ENCODE measurements at regions of chr5 and their contacts with region 1.

Region 1: DNA sequence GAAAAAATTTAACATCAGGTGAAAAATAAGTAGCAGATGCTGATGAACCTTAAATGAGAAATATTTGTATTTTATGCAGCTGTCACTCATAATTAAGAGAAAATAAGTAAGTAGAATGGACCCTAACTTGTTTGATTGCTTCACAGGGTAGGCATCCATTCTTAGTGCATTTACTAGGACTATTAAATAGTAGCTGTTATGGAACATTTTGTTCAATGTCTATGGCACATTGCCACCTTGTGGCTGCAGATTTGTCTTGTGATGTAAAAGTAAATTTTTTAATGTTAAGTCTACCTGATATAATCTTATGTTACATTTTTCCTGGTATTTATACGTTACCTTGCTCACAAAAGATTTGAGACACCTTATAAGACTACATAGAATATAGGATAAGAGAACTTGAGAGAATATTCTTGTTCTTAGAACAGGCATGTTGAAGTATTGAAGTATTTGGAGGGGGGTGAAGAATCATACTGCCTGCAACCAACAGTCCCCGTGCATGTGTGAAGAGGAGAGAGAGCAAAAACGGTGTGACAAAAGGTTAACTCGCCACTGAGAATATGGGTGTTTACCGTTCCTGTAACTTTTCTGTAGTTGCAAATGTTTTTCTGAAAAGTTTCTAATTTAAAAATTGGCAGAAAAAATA is 161.1 kb downstream of the MAST4 start:
- DNase-seq: peak; percentile 63
- ATAC-seq: peak; percentile 51
- H3K4me3 ChIP-seq: no peak overlapping the region
- H3K4me3 Mint-ChIP-seq: no peak overlapping the region
- H3K27ac ChIP-seq: no peak overlapping the region
- H3K27ac Mint-ChIP-seq: no peak overlapping the region
- H3K4me1 ChIP-seq: peaks cover 0 to 5% of the 10 kb centered on the region in 2 donors
- H3K4me1 Mint-ChIP-seq: peaks cover 8% of the 10 kb centered on the region
- H3K27me3 ChIP-seq: no peaks in the 10 kb centered on the region
- H3K27me3 Mint-ChIP-seq: peaks cover 14% of the 10 kb centered on the region
- CTCF ChIP-seq: peak; percentile 77

Region 2: DNA sequence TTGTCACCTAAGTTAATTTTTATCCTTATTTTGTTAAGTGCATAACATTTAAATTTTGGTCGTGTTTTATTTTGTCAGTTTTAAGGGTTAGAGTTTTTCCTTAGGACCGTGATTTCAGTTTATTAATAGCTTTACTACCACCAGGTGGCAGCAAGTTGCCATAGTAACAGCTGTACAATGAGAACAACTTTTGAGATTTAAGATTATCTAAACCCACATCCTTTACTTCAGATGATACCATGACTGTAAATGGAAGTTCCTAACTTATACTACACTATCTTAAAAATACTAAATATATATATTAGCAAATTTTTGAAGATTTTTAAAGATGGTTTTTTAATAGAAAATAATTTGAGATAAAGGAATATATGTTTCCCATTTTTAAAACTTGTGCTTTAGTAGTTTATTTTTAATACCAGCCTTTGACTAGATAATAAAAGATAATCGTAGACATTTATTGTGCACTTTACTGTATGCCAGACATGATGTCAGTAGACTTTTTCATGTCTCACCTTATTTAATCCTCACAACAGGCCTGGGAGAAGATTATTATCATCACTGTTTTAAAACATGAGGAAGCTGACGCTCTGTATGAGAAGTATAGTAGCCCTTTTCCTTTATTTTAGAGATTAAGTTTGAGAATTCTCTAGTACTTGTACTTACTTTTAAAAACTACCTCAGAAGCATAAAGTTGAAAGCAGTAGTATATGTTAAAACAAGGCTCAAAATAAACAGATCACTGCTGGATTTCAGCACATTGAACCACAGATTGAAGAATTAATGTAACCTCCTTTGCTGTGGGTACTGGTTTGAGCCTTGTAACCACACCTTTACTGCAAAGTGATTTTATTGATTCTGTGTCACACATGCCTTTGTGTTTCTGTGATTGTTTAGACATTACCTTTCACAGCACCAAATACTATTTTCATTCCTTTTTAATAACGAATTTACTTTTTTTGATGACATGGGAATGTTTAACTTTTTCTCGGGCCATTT is 585.7 kb before region 1 on chr5:
- CTCF ChIA-PET with region 1: interaction called, 10 read pairs
- POLR2A ChIA-PET with region 1: no interaction called
- intact Hi-C with region 1: loop called (anchors 1 kb)
- DNase-seq: peak; percentile 71
- ATAC-seq: peak; percentile 64
- H3K4me3 ChIP-seq: no peak overlapping the region
- H3K4me3 Mint-ChIP-seq: no peak overlapping the region
- H3K27ac ChIP-seq: peak overlapping the region; percentile 18 to 60
- H3K27ac Mint-ChIP-seq: no peak overlapping the region
- H3K4me1 ChIP-seq: peaks cover 0 to 8% of the 10 kb centered on the region in 2 donors
- H3K4me1 Mint-ChIP-seq: peaks cover 20% of the 10 kb centered on the region
- H3K27me3 ChIP-seq: no peaks in the 10 kb centered on the region
- H3K27me3 Mint-ChIP-seq: no peaks in the 10 kb centered on the region
- CTCF ChIP-seq: peak; percentile 70

Region 3: DNA sequence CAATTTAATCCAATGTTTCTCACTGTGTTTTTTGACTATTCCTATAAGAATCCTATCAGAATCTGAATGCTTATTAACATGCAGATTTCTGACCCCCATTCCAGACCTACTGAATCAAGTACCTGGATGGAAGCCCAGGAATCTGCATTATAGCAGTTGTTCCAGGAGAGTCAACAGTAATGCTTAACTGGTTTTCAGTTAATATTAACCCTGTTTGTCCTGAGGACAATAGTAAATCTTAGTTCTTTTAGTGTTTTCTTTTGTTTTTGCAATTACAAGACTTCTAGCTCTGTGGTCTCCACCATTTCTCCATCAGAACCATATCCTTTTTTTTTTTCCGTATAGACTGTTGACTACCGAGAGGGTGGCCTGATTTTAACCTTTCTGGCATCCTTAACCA is 445.0 kb before region 1 on chr5:
- CTCF ChIA-PET with region 1: interaction called, 462 read pairs
- POLR2A ChIA-PET with region 1: interaction called, 6 read pairs
- intact Hi-C with region 1: loop called (anchors 1 kb)
- DNase-seq: no peak
- ATAC-seq: no peak
- H3K4me3 ChIP-seq: no peak overlapping the region
- H3K4me3 Mint-ChIP-seq: no peak overlapping the region
- H3K27ac ChIP-seq: no peak overlapping the region
- H3K27ac Mint-ChIP-seq: no peak overlapping the region
- H3K4me1 ChIP-seq: no peaks in the 10 kb centered on the region
- H3K4me1 Mint-ChIP-seq: no peaks in the 10 kb centered on the region
- H3K27me3 ChIP-seq: no peaks in the 10 kb centered on the region
- H3K27me3 Mint-ChIP-seq: peaks cover 6% of the 10 kb centered on the region
- CTCF ChIP-seq: no peak

Region 4: DNA sequence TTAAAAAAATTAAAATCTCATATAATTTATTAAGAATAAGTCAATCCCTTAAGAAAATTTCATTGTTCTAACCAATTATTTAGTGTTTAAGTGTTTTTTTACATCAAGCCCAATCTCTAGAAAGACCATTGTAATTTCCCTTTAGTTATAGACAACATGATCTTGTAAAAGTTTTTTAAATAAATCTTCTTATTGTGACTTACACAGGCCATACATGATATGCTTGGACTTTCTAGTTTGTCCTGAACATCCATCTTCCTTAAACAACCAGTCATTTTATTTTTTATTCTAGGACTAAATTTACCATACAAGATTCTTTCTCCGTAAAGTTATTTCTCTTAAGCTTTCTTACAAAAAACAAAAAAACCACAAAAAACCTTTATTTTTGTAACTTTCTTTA is 287.6 kb before region 1 on chr5:
- CTCF ChIA-PET with region 1: interaction called, 18 read pairs
- POLR2A ChIA-PET with region 1: no interaction called
- intact Hi-C with region 1: loop called (anchors 1 kb)
- DNase-seq: no peak
- ATAC-seq: no peak
- H3K4me3 ChIP-seq: no peak overlapping the region
- H3K4me3 Mint-ChIP-seq: no peak overlapping the region
- H3K27ac ChIP-seq: no peak overlapping the region
- H3K27ac Mint-ChIP-seq: no peak overlapping the region
- H3K4me1 ChIP-seq: peaks cover 4 to 8% of the 10 kb centered on the region in 2 donors
- H3K4me1 Mint-ChIP-seq: peaks cover 13% of the 10 kb centered on the region
- H3K27me3 ChIP-seq: no peaks in the 10 kb centered on the region
- H3K27me3 Mint-ChIP-seq: no peaks in the 10 kb centered on the region
- CTCF ChIP-seq: no peak

Region 5: DNA sequence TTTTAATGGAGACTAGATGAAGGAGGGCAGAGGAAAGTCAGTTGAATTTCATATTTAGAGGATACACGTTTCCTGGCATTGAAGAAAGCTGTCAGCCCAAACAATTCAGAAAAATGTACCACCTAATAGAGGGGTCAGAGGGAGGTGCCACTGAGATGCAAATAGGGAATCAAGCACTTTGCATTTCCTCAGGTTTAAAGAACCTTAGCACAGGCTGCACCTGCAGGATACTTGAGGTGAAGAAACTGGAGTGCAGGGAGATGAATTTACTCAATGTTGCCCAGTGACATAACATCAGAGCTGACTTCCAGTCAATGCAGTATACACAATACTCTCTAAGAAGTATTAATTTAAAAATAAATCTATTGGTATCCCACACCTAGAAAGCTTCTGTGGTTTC is 228.1 kb before region 1 on chr5:
- CTCF ChIA-PET with region 1: interaction called, 11 read pairs
- POLR2A ChIA-PET with region 1: no interaction called
- intact Hi-C with region 1: no loop called
- DNase-seq: no peak
- ATAC-seq: peak; percentile 36
- H3K4me3 ChIP-seq: no peak overlapping the region
- H3K4me3 Mint-ChIP-seq: no peak overlapping the region
- H3K27ac ChIP-seq: no peak overlapping the region
- H3K27ac Mint-ChIP-seq: no peak overlapping the region
- H3K4me1 ChIP-seq: no peaks in the 10 kb centered on the region
- H3K4me1 Mint-ChIP-seq: peaks cover 4% of the 10 kb centered on the region
- H3K27me3 ChIP-seq: no peaks in the 10 kb centered on the region
- H3K27me3 Mint-ChIP-seq: no peaks in the 10 kb centered on the region
- CTCF ChIP-seq: no peak

Region 6: DNA sequence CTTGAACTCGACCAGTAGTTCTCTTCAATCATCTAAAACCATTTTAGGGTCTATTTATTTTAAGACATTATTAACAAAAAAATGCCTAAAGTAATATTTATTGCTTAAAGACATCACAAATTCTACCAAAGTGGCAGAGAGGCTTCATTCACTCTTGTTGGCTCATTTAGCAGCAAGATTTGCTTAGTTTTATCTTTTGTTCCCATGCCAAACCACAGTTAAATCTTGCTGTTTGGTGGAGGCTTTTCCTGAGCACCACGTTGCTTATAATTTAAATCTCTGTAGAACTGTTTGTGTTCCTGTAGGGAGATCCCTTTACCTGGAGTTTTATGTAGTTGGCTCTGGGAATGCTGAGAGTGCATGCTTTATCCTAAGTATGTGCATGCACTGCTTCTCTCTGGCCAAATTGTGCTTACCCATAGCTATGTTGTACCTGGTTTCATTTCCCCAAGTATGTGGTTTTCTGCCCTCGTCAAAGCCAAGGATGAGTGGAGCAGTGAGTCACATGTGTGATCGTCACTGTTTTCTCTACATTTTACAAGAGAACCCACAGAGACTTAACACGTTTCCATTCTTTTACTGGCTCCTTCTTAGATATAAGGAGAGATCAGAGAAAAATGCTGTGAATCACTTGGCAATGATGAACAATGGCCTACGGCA is 203.3 kb before region 1 on chr5:
- CTCF ChIA-PET with region 1: interaction called, 3 read pairs
- POLR2A ChIA-PET with region 1: no interaction called
- intact Hi-C with region 1: loop called (anchors 1 kb)
- DNase-seq: peak; percentile 93
- ATAC-seq: peak; percentile 94
- H3K4me3 ChIP-seq: peak overlapping the region in 1 of 5 experiments; percentile 1
- H3K4me3 Mint-ChIP-seq: peak overlapping the region; percentile 65
- H3K27ac ChIP-seq: peak overlapping the region; percentile 69 to 75
- H3K27ac Mint-ChIP-seq: peak overlapping the region; percentile 93
- H3K4me1 ChIP-seq: peaks cover 28 to 34% of the 10 kb centered on the region in 2 donors
- H3K4me1 Mint-ChIP-seq: peaks cover 39% of the 10 kb centered on the region
- H3K27me3 ChIP-seq: peaks cover 0 to 2% (median 0%) of the 10 kb centered on the region in 4 experiments
- H3K27me3 Mint-ChIP-seq: no peaks in the 10 kb centered on the region
- CTCF ChIP-seq: no peak

Region 7: DNA sequence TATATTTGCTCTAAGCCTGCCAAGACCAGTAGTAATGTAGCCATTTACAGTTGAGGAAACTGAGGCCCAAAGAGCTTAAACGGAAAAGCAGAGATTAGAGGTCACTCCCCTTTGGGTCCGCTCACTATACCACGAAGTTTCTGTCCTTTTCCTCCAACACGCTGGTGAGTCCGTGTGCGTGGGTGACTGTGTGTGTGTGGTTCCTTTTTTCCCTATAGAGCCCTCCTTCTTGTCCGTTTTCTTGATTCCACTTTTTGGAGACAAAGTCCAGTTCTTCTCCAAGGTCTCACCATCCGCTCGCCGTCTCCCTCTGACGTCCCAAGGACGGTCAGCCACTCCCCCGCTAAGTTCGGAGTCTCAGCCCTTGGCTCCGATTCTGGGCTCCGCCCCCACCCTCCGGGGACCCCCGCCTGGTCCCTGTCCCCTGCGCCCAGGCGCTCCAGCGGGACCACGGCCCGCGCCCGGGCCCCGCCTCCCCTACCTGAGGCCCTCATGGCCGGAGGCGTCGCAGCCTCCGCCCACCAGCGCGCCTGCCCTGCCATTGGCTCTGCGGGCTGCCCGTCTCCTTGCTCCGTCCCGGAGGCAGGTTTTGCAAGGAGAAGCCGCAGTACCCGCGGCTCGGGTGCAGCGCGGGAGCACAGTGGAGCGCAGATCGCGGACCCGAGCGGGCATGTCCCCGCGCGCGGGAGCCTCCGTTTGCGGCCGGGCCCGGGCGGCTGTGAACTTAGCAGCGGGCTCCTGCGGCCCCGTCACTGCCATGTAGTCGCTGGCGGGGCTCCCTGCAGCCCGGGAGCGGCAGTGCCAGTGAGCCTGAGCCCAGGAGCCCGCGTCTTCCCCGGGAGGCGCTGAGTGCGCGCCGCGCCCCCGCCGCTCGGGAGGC is 161.3 kb before region 1 on chr5 and contains the start of gene MAST4:
- CTCF ChIA-PET with region 1: interaction called, 3 read pairs
- POLR2A ChIA-PET with region 1: no interaction called
- intact Hi-C with region 1: loop called (anchors 10 kb)
- DNase-seq: peak; percentile 85
- ATAC-seq: peak; percentile 94
- H3K4me3 ChIP-seq: peak within 1 kb of the TSS; percentile 52 to 79 (median 59)
- H3K4me3 Mint-ChIP-seq: peak within 1 kb of the TSS; percentile 91
- H3K27ac ChIP-seq: no peak within 1 kb of the TSS
- H3K27ac Mint-ChIP-seq: peak within 1 kb of the TSS; percentile 2
- H3K4me1 ChIP-seq: peaks cover 14 to 16% of the 10 kb centered on the region in 2 donors
- H3K4me1 Mint-ChIP-seq: peaks cover 23% of the 10 kb centered on the region
- H3K27me3 ChIP-seq: peaks cover 0 to 48% (median 32%) of the 10 kb centered on the region in 4 experiments
- H3K27me3 Mint-ChIP-seq: peaks cover 45% of the 10 kb centered on the region
- CTCF ChIP-seq: no peak
- total RNA-seq, gene MAST4: 56.0 and 57.1 TPM in 2 replicates

Region 8: DNA sequence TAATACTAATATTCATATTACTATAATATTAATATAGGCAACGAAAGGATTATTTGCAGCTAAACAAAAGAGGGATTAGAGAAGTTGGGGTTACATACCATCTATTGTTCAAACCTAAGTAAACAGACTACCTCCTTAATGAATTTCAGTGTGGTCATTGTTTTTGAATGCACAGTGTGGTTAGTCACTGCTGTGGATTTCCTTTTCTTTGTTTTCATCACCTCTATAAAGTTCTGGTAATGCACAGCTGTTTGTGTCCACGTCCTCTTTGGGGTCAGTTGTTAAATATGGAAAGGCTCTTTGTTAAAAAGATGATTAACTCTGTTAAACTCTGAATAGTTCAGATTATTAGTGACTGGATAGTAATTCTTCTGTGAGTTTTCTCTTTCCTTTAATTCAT is 72.5 kb after region 1 on chr5:
- CTCF ChIA-PET with region 1: no interaction called
- POLR2A ChIA-PET with region 1: no interaction called
- intact Hi-C with region 1: no loop called
- DNase-seq: no peak
- ATAC-seq: no peak
- H3K4me3 ChIP-seq: no peak overlapping the region
- H3K4me3 Mint-ChIP-seq: peak overlapping the region; percentile 38
- H3K27ac ChIP-seq: no peak overlapping the region
- H3K27ac Mint-ChIP-seq: no peak overlapping the region
- H3K4me1 ChIP-seq: peaks cover 13 to 20% of the 10 kb centered on the region in 2 donors
- H3K4me1 Mint-ChIP-seq: peaks cover 19% of the 10 kb centered on the region
- H3K27me3 ChIP-seq: peaks cover 0 to 10% (median 3%) of the 10 kb centered on the region in 4 experiments
- H3K27me3 Mint-ChIP-seq: peaks cover 32% of the 10 kb centered on the region
- CTCF ChIP-seq: no peak